Activated naive CD4-positive, alpha-beta T cell treated with anti-CD3 and anti-CD28 coated beads for 36 hours (primary cell): ENCODE measurements at regions of chr2 and their contacts with region 1.

Region 1: DNA sequence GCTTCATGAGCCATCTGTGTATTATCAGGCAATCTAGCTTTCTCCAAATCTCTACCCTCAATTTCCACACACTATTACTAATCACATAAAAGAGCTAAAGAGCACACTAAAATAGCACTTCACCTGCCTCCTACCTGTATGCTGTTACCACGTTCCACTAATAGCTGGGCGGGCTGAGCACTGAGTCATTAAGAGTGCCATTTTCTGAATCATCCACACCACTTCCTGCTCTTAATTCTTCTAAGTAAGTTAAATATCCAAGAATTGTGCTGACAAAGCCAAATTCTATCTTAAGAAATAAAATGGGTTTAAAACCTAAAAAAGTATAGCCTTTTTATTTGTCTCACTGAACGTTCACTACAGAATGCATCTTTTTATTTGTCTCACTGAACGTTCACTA is 35.7 kb downstream of the NOL10 start:
- DNase-seq: peak; percentile 87
- H3K4me3 Mint-ChIP-seq: peak overlapping the region; percentile 29
- H3K27ac Mint-ChIP-seq: peak overlapping the region; percentile 92
- H3K4me1 Mint-ChIP-seq: peaks cover 46% of the 10 kb centered on the region
- H3K27me3 Mint-ChIP-seq: no peaks in the 10 kb centered on the region

Region 2: GRCh38 chr2:9990735-9991134 is 663.3 kb before region 1 on chr2:
- CTCF ChIA-PET with region 1: no interaction called
- intact Hi-C with region 1: loop called (anchors 2 kb)
- DNase-seq: peak; percentile 33
- H3K4me3 Mint-ChIP-seq: no peak overlapping the region
- H3K27ac Mint-ChIP-seq: no peak overlapping the region
- H3K4me1 Mint-ChIP-seq: peaks cover 13% of the 10 kb centered on the region
- H3K27me3 Mint-ChIP-seq: no peaks in the 10 kb centered on the region

Region 3: GRCh38 chr2:10302479-10303180 is 351.4 kb before region 1 on chr2 and contains the start of gene HPCAL1:
- CTCF ChIA-PET with region 1: no interaction called
- intact Hi-C with region 1: loop called (anchors 2 kb)
- DNase-seq: peak; percentile 84
- H3K4me3 Mint-ChIP-seq: peak within 1 kb of the TSS; percentile 99
- H3K27ac Mint-ChIP-seq: peak within 1 kb of the TSS; percentile 83
- H3K4me1 Mint-ChIP-seq: peaks cover 71% of the 10 kb centered on the region
- H3K27me3 Mint-ChIP-seq: no peaks in the 10 kb centered on the region
- total RNA-seq, gene HPCAL1: 71.4 to 73.8 TPM

Region 4: GRCh38 chr2:10493636-10494281 is 160.3 kb before region 1 on chr2:
- CTCF ChIA-PET with region 1: no interaction called
- intact Hi-C with region 1: loop called (anchors 1 kb)
- DNase-seq: peak; percentile 89
- H3K4me3 Mint-ChIP-seq: no peak overlapping the region
- H3K27ac Mint-ChIP-seq: peak overlapping the region; percentile 46
- H3K4me1 Mint-ChIP-seq: peaks cover 13% of the 10 kb centered on the region
- H3K27me3 Mint-ChIP-seq: peaks cover 4% of the 10 kb centered on the region

Region 5: GRCh38 chr2:10668402-10669012 is 14.4 kb after region 1 on chr2:
- CTCF ChIA-PET with region 1: interaction called, 6 read pairs
- intact Hi-C with region 1: loop called (anchors 1 kb)
- DNase-seq: peak; percentile 26
- H3K4me3 Mint-ChIP-seq: no peak overlapping the region
- H3K27ac Mint-ChIP-seq: no peak overlapping the region
- H3K4me1 Mint-ChIP-seq: peaks cover 8% of the 10 kb centered on the region
- H3K27me3 Mint-ChIP-seq: no peaks in the 10 kb centered on the region

Region 6: GRCh38 chr2:10680957-10681356 is 26.9 kb after region 1 on chr2:
- CTCF ChIA-PET with region 1: no interaction called
- intact Hi-C with region 1: loop called (anchors 2 kb)
- DNase-seq: no peak
- H3K4me3 Mint-ChIP-seq: no peak overlapping the region
- H3K27ac Mint-ChIP-seq: peak overlapping the region; percentile 71
- H3K4me1 Mint-ChIP-seq: peaks cover 32% of the 10 kb centered on the region
- H3K27me3 Mint-ChIP-seq: no peaks in the 10 kb centered on the region

Region 7: DNA sequence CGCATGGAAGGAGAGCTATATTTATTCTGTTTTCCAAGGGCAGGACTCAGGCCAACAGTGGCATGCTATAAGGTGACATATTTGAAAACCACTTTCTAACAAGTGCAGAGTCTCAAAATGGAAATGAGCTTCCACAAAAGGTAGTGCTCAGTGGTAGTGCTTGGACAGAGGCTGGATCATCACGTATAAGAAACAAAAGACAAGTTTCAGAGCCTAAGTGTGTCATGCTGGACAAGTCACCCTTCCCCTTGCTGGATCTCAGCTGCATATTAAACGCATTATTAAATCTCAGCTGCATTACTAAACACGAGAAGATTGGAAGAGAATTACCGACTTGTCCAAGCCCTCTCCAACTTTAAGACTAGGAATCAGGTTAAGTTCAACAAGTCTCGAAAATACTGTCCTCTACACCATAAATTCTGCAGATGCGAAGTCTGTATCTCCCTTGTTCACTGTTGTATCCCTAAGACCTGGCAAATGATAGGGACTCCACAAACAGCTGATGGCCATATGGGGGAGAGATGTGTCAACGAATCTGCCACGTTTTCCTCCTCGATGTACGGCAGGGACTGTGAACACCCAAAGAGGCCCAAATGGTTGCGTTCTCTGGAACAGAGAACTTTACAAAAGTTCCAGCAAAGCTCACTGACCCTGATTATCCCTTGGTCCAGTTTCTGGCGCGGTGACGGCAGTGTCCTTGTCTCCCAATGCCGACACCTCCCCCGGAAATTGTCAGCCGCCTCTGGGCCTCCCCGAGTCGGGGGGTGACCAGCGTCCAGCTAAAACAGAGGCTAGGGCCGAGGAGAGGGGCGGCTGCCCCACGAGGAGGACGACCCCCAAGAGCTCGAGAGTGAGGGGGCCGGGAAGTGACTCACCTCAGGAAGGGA is 35.1 kb after region 1 on chr2:
- CTCF ChIA-PET with region 1: no interaction called
- intact Hi-C with region 1: loop called (anchors 2 kb)
- DNase-seq: peak; percentile 28
- H3K4me3 Mint-ChIP-seq: no peak overlapping the region
- H3K27ac Mint-ChIP-seq: no peak overlapping the region
- H3K4me1 Mint-ChIP-seq: peaks cover 8% of the 10 kb centered on the region
- H3K27me3 Mint-ChIP-seq: no peaks in the 10 kb centered on the region